ENCODE measurements at regions of chr16 and their contacts with region 1.

Region 1: GRCh38 chr16:30382111-30382881 is at the start of gene SEPTIN1:
- DNase-seq: peak; percentile 40
- ATAC-seq: peak; percentile 61
- H3K4me3 ChIP-seq: peak within 1 kb of the TSS; percentile 97
- H3K27ac ChIP-seq: peak within 1 kb of the TSS; percentile 91
- H3K4me1 ChIP-seq: peaks cover 26% of the 10 kb centered on the region
- H3K27me3 ChIP-seq: no peaks in the 10 kb centered on the region
- CTCF ChIP-seq: no peak
- EP300 ChIP-seq: no peak
- POLR2A ChIP-seq: peak; percentile 92
- RAD21 ChIP-seq: no peak
- polyA plus RNA-seq, gene SEPTIN1: 2.8 to 16.0 TPM

Region 2: GRCh38 chr16:30395155-30395991 is 13.1 kb after region 1 on chr16 and contains the start of gene ZNF48:
- CTCF ChIA-PET with region 1: interaction called, 7 read pairs
- POLR2A ChIA-PET with region 1: interaction called, 25 read pairs
- RAD21 ChIA-PET with region 1: interaction called, 12 read pairs
- SMC1A ChIA-PET with region 1: interaction called, 12 read pairs
- in situ Hi-C with region 1: no loop called
- intact Hi-C with region 1: no loop called
- DNase-seq: no peak
- ATAC-seq: peak; percentile 90
- H3K4me3 ChIP-seq: peak within 1 kb of the TSS; percentile 92
- H3K27ac ChIP-seq: peak within 1 kb of the TSS; percentile 42
- H3K4me1 ChIP-seq: peaks cover 13% of the 10 kb centered on the region
- H3K27me3 ChIP-seq: no peaks in the 10 kb centered on the region
- CTCF ChIP-seq: peak in 2 of 3 experiments; percentile 42 to 46; a peak in 3 of 6 replicates
- EP300 ChIP-seq: no peak
- POLR2A ChIP-seq: peak; percentile 74
- RAD21 ChIP-seq: no peak
- polyA plus RNA-seq, gene ZNF48: 0.14 to 1.0 TPM

Region 3: DNA sequence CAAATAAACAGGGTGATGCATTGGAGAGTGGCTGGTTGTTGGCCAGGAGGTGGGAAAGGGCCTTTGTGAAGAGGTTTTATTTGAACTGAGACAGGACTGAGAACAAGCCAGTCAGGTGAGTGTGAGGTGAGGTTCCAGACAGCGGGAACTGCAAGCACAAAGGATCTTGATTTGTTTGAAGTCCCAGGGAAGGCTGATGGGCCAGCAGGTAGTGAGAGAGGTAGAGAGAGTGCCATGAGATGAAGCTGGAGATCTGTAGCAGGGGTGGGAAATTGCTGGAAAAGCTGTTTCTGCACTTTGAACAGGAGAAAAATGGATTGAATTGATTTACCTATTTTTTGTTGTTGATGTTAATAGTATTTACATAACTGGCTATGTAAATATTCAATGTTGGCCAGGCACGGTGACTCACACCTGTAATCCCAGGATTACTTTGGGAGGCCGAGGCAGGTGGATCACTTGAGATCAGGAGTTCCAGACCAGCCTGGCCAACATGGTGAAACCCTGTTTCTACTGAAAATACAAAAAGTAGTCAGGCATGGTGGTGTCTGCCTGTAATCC is 55.3 kb after region 1 on chr16:
- CTCF ChIA-PET with region 1: no interaction called
- POLR2A ChIA-PET with region 1: no interaction called
- RAD21 ChIA-PET with region 1: no interaction called
- SMC1A ChIA-PET with region 1: no interaction called
- in situ Hi-C with region 1: no loop called
- intact Hi-C with region 1: no loop called
- DNase-seq: no peak
- ATAC-seq: no peak
- H3K4me3 ChIP-seq: no peak overlapping the region
- H3K27ac ChIP-seq: no peak overlapping the region
- H3K4me1 ChIP-seq: peaks cover 9% of the 10 kb centered on the region
- H3K27me3 ChIP-seq: no peaks in the 10 kb centered on the region
- CTCF ChIP-seq: no peak
- EP300 ChIP-seq: no peak
- POLR2A ChIP-seq: no peak
- RAD21 ChIP-seq: no peak

Region 4: DNA sequence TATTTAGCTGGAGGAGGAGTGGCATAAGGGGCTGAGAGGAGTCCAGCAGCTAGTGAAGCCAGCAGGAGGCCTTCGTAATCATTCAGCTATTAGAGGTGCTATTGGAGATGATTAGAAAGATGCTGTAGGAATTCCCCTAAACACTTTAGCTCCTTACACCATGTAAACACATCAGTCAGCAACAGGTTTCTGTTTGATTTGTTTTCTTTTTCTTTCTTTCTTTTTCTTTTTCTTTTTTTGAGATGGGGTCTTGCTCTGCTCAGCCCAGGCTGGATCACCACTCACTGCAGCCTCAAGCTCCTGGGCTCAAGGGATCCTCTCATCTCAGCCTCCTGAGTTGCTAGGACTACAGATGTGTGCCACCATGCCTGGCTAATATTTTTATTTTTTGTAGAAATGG is 74.0 kb after region 1 on chr16:
- CTCF ChIA-PET with region 1: no interaction called
- POLR2A ChIA-PET with region 1: no interaction called
- RAD21 ChIA-PET with region 1: no interaction called
- SMC1A ChIA-PET with region 1: no interaction called
- in situ Hi-C with region 1: no loop called
- intact Hi-C with region 1: no loop called
- DNase-seq: no peak
- ATAC-seq: peak; percentile 39
- H3K4me3 ChIP-seq: no peak overlapping the region
- H3K27ac ChIP-seq: peak overlapping the region; percentile 71
- H3K4me1 ChIP-seq: peaks cover 52% of the 10 kb centered on the region
- H3K27me3 ChIP-seq: no peaks in the 10 kb centered on the region
- CTCF ChIP-seq: no peak
- EP300 ChIP-seq: no peak
- POLR2A ChIP-seq: no peak
- RAD21 ChIP-seq: no peak

Region 5: GRCh38 chr16:30541502-30542329 is 159.4 kb after region 1 on chr16:
- CTCF ChIA-PET with region 1: no interaction called
- POLR2A ChIA-PET with region 1: no interaction called
- RAD21 ChIA-PET with region 1: no interaction called
- SMC1A ChIA-PET with region 1: no interaction called
- in situ Hi-C with region 1: no loop called
- intact Hi-C with region 1: no loop called
- DNase-seq: no peak
- ATAC-seq: no peak
- H3K4me3 ChIP-seq: no peak overlapping the region
- H3K27ac ChIP-seq: no peak overlapping the region
- H3K4me1 ChIP-seq: no peaks in the 10 kb centered on the region
- H3K27me3 ChIP-seq: no peaks in the 10 kb centered on the region
- CTCF ChIP-seq: no peak
- EP300 ChIP-seq: no peak
- POLR2A ChIP-seq: no peak
- RAD21 ChIP-seq: no peak

Measured in GM12878 (cell line).